ENCODE measurements at regions of chr17 and their contacts with region 1.

Region 1: DNA sequence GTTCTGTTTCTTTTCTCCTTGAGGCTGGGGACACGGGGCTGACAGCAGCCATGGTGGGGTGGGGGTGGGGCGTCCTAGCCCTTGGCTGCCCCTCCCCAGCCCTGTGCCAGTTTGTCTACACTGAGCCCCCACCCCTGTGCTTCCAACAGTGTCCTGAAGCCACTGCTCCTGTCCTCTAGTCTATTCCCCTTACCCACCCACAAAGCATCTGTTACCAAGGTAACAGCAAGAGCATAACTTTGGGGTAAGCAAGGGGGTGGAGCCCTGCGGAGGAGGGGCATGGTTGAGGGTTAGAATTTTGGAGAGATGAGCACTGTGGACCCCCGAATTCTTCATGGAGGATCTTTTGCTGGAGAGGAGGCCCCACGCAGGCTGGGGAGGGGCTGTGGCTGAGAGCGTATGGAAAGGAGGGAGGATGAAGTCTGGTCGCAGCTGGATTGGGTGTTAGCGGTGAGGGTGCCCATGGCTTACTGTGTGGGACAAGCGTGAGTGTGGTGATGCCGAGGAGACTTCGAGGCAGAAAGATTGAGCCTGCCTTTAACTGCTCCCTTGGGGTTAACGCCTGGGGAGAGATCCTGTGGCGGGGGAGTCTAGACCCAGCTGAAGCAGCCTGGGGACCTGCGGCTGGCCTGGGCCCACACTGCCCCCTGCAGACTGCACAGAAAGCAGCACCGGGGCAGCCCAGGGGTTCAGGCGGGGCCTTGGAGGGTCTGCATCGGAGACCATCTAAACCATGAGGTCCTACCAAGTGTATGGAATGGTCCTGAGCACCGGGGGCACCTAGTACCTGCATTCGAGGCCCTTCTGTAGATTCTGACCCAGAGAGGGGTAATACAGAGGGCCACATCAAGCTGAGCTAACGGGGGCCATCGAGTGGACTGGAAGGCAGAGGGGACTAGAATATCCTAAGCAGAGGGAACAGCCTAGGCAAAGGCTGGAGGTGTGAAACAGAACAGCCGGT is 6.1 kb upstream of the STAC2 start:
- DNase-seq: no peak
- H3K4me3 ChIP-seq: peak overlapping the region in 1 of 2 donors; percentile 38
- H3K27ac ChIP-seq: peak overlapping the region in 1 of 2 donors; percentile 43
- H3K4me1 ChIP-seq: peaks cover 6 to 14% of the 10 kb centered on the region in 2 donors
- H3K27me3 ChIP-seq: no peaks in the 10 kb centered on the region
- CTCF ChIP-seq: peak; percentile 81 to 94 (median 85)

Region 2: DNA sequence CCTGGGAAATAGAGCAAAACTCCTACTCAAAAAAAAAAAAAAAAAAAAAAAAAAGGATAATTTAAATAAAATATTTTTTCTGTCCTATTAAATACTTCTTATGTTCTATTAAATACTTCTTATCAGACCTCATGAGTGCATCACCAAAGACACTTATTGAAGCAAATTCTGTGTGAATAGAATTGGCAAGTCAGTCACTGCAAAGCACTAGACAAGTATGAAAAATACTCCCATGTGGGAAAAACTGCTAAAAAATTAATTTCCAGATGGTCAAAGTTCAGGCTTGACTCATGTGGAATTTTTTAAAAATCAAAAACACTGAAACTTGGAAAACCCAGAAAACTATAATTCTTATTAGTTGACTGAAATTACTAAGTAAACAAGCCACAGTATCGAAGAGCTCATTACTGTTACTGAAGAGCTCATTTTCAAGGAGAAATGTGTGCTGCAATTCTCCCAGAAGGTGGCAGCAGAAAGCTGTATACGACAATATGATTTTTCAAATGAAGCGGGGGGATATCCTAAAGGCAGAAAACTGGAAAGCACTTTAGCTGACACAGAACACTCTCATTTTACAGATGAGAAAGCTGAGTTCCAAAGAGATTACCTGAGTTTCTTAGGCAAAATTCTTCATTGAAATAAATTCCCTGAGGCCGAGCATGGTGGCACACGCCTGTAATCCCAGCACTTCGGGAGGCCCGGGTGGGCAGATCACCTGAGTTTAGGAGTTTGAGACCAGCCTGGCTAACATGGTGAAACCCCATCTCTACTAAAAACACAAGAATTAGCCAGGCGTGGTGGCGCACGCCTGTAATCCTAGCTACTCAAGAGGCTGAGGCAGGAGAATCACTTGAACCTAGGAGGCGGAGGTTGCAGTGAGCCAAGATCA is 248.8 kb before region 1 on chr17:
- intact Hi-C with region 1: loop called (anchors 5 kb)
- DNase-seq: peak in 1 of 2 donors; percentile 71
- H3K4me3 ChIP-seq: no peak overlapping the region
- H3K27ac ChIP-seq: no peak overlapping the region
- H3K4me1 ChIP-seq: peaks cover 0 to 5% of the 10 kb centered on the region in 2 donors
- H3K27me3 ChIP-seq: no peaks in the 10 kb centered on the region
- CTCF ChIP-seq: peak; percentile 70 to 79 (median 73)

Region 3: DNA sequence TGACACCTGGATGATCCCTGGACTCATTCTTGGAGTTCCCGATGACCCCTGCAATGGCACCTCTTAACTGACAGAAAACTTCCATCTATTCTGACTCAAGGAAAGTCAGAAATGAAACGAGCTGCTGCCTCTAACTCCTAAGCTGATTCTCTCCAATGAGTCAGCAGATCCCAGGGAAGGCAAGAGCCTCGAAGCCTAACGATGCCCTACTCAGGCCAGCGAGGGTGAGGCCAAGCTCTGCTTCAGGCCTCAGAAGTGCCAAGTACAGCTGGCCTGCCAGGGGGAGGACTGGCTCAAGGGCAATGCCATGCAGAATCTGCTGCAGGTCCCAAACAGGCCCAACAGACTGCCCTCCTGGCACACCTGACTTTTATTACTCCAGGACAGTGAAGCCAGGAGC is 116.7 kb before region 1 on chr17:
- intact Hi-C with region 1: no loop called
- DNase-seq: no peak
- H3K4me3 ChIP-seq: no peak overlapping the region
- H3K27ac ChIP-seq: peak overlapping the region in 1 of 2 donors; percentile 24
- H3K4me1 ChIP-seq: peaks cover 0 to 7% of the 10 kb centered on the region in 2 donors
- H3K27me3 ChIP-seq: no peaks in the 10 kb centered on the region
- CTCF ChIP-seq: no peak

Region 4: DNA sequence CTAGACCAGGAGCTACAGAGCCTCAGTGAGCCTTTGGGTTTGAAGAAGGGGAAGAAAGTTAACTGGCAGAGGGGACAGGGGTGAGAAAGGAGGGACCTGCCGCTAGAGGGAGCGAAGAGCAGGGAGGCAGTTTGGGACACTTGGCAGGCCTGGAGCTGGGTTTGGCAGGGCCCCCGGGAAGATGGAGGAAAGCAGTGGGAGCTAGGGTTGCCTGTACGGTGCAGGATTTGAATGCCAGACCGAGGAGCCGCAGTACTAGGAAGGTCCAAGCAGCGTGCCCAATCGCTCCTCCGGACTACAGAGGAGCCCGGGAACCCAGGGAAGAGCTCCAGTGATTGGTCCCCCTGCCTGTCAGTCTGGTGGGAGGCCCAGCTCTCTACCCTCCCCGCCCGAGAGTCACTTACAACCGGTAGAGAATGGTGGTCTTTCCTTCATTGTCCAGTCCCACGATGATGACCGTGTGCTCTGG is 67.2 kb before region 1 on chr17:
- intact Hi-C with region 1: loop called (anchors 5 kb)
- DNase-seq: peak; percentile 69 to 95
- H3K4me3 ChIP-seq: peak overlapping the region; percentile 56 to 66
- H3K27ac ChIP-seq: peak overlapping the region; percentile 11 to 31
- H3K4me1 ChIP-seq: peaks cover 7 to 10% of the 10 kb centered on the region in 2 donors
- H3K27me3 ChIP-seq: no peaks in the 10 kb centered on the region
- CTCF ChIP-seq: peak; percentile 78 to 88 (median 83)

Region 5: DNA sequence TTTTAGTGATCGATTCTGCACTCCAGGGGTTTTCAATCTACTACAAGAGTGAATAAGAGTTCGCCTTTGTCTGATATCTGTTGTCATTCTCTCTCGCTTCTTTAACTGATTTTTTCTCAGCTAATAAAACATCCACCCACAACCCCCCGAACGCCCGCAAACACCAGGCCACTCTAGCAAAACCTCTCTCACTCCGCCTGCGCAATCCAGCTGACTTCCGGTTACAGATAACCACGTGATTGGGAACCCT is 32.1 kb before region 1 on chr17:
- intact Hi-C with region 1: loop called (anchors 5 kb)
- DNase-seq: peak; percentile 56 to 96
- H3K4me3 ChIP-seq: peak overlapping the region; percentile 83 to 89
- H3K27ac ChIP-seq: peak overlapping the region; percentile 92 to 98
- H3K4me1 ChIP-seq: peaks cover 28 to 46% of the 10 kb centered on the region in 2 donors
- H3K27me3 ChIP-seq: no peaks in the 10 kb centered on the region
- CTCF ChIP-seq: no peak

Region 6: DNA sequence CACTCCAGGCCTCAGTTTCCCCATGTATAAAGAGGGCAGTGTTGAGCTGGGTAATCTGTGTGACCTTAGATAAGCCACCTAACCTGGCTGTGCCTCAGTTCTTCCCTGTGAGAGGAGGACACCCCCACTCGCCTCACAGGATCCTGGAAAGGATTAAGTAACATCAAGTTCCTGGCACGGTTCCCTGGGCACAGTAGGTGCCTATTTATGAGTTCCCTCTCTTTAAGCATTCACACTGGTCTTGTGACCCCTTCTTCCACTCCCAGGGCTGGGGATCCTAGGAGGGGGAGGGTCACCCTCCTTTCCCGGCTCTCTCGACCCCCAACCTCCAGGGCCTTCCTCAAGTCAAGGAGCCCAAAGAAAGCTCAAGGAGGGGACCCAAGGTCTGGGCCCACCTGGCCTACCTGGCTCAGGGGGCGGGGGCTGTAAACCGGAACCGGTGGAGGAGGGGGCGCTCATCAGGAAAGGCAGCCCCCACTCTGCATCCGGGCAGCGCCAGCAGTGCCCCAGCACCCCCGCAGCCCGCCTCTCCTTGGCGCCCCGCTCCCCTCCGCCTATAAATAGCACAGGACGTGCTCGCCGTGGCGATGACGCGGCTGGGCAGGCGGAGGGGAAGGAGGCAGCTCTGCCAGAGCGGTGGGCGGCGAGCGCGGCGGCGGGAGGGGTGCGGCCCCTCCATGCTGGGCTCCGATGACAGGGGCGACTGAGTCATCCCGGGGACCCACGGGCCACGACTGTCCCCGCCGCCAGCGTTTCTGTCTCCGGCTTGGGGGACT is 22.4 kb before region 1 on chr17:
- intact Hi-C with region 1: loop called (anchors 1 kb)
- DNase-seq: peak; percentile 79 to 94
- H3K4me3 ChIP-seq: peak overlapping the region; percentile 32 to 68
- H3K27ac ChIP-seq: peak overlapping the region; percentile 82 to 94
- H3K4me1 ChIP-seq: peaks cover 16 to 30% of the 10 kb centered on the region in 2 donors
- H3K27me3 ChIP-seq: no peaks in the 10 kb centered on the region
- CTCF ChIP-seq: no peak

Region 7: GRCh38 chr17:39281806-39282205 is 49.9 kb after region 1 on chr17:
- intact Hi-C with region 1: no loop called
- DNase-seq: no peak
- H3K4me3 ChIP-seq: no peak overlapping the region
- H3K27ac ChIP-seq: peak overlapping the region in 1 of 2 donors; percentile 60
- H3K4me1 ChIP-seq: peaks cover 0 to 7% of the 10 kb centered on the region in 2 donors
- H3K27me3 ChIP-seq: no peaks in the 10 kb centered on the region
- CTCF ChIP-seq: no peak